ENCODE measurements at regions of chr1 and their contacts with region 1.

Region 1: GRCh38 chr1:15128520-15129313 is 24.8 kb upstream of the TMEM51 start:
- DNase-seq: peak; percentile 89
- ATAC-seq: peak; percentile 98
- H3K4me3 Mint-ChIP-seq: no peak overlapping the region
- H3K27ac Mint-ChIP-seq: no peak overlapping the region
- H3K4me1 Mint-ChIP-seq: peaks cover 3% of the 10 kb centered on the region; the same call in 1 of the 2 replicates
- H3K27me3 Mint-ChIP-seq: peaks cover 6% of the 10 kb centered on the region
- CTCF ChIP-seq: peak; percentile 85

Region 2: DNA sequence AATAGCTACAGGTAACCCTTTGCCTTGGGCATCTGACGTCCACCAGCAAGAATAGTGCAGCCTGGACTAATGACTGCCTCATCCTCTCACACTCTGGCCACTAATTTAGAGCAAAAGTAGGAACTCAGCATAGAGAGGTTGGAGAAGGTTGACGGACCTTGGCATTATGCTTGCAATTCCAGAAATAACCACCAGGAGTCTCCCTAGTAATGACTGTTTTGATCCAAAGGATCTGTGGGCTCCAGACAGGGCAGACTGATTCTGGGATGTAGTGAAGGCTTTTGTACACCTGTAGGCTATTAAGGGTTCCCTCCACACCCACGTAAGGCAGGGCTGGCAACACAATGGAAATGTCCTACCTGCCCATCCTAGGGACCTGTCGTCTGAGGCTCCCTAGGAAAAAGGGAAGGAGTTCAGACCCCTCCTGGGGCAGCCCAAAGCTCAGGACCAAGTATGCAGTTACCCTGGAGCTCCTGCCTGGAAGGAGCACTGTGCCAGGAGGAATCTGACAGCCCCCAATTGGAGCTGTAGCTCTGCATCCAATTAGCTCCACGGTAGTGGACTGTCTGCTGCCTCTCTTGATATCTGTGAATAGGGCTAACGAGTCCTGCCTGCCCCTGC is 66.1 kb before region 1 on chr1:
- CTCF ChIA-PET with region 1: no interaction called
- POLR2A ChIA-PET with region 1: no interaction called
- DNase-seq: no peak
- ATAC-seq: peak; percentile 65
- H3K4me3 Mint-ChIP-seq: no peak overlapping the region
- H3K27ac Mint-ChIP-seq: no peak overlapping the region
- H3K4me1 Mint-ChIP-seq: peaks cover 4% of the 10 kb centered on the region
- H3K27me3 Mint-ChIP-seq: no peaks in the 10 kb centered on the region
- CTCF ChIP-seq: peak; percentile 84

Region 3: GRCh38 chr1:15106608-15107007 is 22.1 kb before region 1 on chr1:
- CTCF ChIA-PET with region 1: interaction called, 17 read pairs
- POLR2A ChIA-PET with region 1: no interaction called
- DNase-seq: no peak
- ATAC-seq: no peak
- H3K4me3 Mint-ChIP-seq: no peak overlapping the region
- H3K27ac Mint-ChIP-seq: no peak overlapping the region
- H3K4me1 Mint-ChIP-seq: peaks cover 26% of the 10 kb centered on the region
- H3K27me3 Mint-ChIP-seq: peaks cover 8% of the 10 kb centered on the region
- CTCF ChIP-seq: no peak

Region 4: GRCh38 chr1:15141935-15142539 is 13.3 kb after region 1 on chr1:
- CTCF ChIA-PET with region 1: interaction called, 10 read pairs
- POLR2A ChIA-PET with region 1: no interaction called
- DNase-seq: no peak
- ATAC-seq: no peak
- H3K4me3 Mint-ChIP-seq: no peak overlapping the region
- H3K27ac Mint-ChIP-seq: no peak overlapping the region
- H3K4me1 Mint-ChIP-seq: peaks cover 12% of the 10 kb centered on the region
- H3K27me3 Mint-ChIP-seq: peaks cover 2% of the 10 kb centered on the region; the same call in 1 of the 2 replicates
- CTCF ChIP-seq: no peak

Region 5: GRCh38 chr1:15206418-15207030 is 77.8 kb after region 1 on chr1:
- CTCF ChIA-PET with region 1: interaction called, 10 read pairs
- POLR2A ChIA-PET with region 1: no interaction called
- DNase-seq: no peak
- ATAC-seq: peak; percentile 81
- H3K4me3 Mint-ChIP-seq: peak overlapping the region; percentile 62
- H3K27ac Mint-ChIP-seq: peak overlapping the region; percentile 98
- H3K4me1 Mint-ChIP-seq: peaks cover 64% of the 10 kb centered on the region
- H3K27me3 Mint-ChIP-seq: no peaks in the 10 kb centered on the region
- CTCF ChIP-seq: no peak

Region 6: GRCh38 chr1:15283526-15283925 is 154.8 kb after region 1 on chr1:
- CTCF ChIA-PET with region 1: interaction called, 18 read pairs
- POLR2A ChIA-PET with region 1: no interaction called
- DNase-seq: no peak
- ATAC-seq: peak; percentile 26; the same call in 1 of the 2 replicates
- H3K4me3 Mint-ChIP-seq: no peak overlapping the region
- H3K27ac Mint-ChIP-seq: no peak overlapping the region
- H3K4me1 Mint-ChIP-seq: no peaks in the 10 kb centered on the region
- H3K27me3 Mint-ChIP-seq: peaks cover 5% of the 10 kb centered on the region; the same call in 1 of the 2 replicates
- CTCF ChIP-seq: no peak

Region 7: DNA sequence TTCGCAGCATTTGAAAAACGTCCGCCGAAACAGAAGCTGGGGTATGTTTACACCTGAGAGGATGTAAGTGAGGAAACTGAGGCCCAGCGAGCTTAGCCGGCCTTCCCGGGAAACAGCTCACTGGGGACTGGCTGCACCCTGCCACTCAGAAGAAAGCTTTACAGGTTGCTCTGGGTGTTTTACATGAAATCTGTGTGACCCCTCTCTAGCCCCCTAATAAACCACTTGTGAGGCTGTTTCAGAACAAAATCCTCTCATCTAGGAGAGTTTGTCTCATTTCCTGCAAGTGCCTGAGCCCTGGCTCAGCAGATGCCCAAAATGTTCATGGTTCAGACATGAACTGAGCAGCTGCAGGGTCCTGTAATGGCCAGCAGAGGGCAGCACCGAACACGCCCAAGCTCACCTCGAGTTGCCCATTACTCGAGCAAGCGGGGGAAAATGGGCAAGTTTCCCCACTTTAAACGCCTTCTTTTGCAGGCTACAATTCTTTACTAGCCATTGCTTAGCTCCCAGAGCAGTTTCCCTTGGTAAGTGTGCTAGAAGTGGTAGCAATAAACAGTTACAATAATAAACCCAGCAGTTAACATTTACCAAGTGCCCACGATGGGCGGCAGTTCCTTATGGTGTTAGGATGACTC is 194.8 kb after region 1 on chr1:
- CTCF ChIA-PET with region 1: interaction called, 11 read pairs
- POLR2A ChIA-PET with region 1: no interaction called
- DNase-seq: peak; percentile 80
- ATAC-seq: peak; percentile 85
- H3K4me3 Mint-ChIP-seq: no peak overlapping the region
- H3K27ac Mint-ChIP-seq: no peak overlapping the region
- H3K4me1 Mint-ChIP-seq: peaks cover 28% of the 10 kb centered on the region
- H3K27me3 Mint-ChIP-seq: no peaks in the 10 kb centered on the region
- CTCF ChIP-seq: peak; percentile 97

Region 8: DNA sequence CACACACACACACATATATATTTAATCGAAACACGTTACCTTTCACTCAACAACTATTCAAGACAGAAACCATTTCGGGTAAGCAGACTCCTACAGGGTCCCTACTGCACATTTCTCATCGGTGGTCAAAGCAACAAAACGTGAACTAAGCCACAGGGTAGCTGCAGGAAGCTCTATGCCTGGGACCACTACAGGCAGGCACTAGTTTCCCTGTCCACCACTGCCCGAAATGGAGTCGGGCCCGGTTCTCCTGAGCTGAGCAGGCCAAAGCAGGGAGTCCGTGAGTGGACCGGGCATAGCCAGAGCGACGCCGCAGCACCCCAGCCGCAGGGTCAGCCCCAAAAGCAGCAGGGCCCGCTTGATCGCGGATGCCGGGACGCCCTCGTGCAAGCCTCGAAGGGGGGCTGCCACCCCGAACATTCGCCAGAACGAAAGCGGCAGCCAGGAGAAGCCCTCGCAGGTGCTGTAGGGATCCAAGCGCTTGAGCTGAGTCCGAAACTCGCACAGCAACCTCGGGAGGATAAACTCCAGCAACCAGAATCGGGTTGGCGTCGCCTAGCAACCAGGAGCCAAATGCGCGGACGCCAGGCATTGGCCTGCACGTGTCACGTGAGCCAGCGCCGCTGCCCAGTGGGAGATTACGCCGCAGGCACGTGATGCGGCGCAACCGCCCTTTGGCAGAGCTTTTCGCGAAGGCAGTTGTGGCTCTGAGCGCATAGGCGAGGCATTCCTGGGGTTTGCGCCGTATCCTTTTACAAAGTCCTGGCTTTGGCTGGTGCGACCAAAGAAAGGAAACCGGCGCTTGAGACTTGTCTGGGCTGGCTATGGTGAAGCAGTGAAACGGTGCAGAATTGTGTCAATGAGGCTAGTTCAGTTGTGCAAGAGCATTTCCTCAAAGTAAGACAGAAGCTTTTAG is 474.6 kb after region 1 on chr1:
- CTCF ChIA-PET with region 1: no interaction called
- POLR2A ChIA-PET with region 1: no interaction called
- DNase-seq: peak; percentile 97
- ATAC-seq: peak; percentile 94
- H3K4me3 Mint-ChIP-seq: peak overlapping the region; percentile 69
- H3K27ac Mint-ChIP-seq: peak overlapping the region; percentile 31; the same call in 1 of the 2 replicates
- H3K4me1 Mint-ChIP-seq: peaks cover 7% of the 10 kb centered on the region
- H3K27me3 Mint-ChIP-seq: peaks cover 41% of the 10 kb centered on the region
- CTCF ChIP-seq: no peak

Measured in WTC11 (cell line).